ENCODE measurements at regions of chr2 and their contacts with region 1.

Region 1: GRCh38 chr2:20299113-20299512 is 51.5 kb downstream of the PUM2 start:
- DNase-seq: no peak
- ATAC-seq: no peak
- H3K4me3 ChIP-seq: no peak overlapping the region
- H3K27ac ChIP-seq: no peak overlapping the region
- H3K4me1 ChIP-seq: no peaks in the 10 kb centered on the region
- H3K27me3 ChIP-seq: no peaks in the 10 kb centered on the region
- CTCF ChIP-seq: no peak

Region 2: GRCh38 chr2:20282916-20283592 is 16.1 kb before region 1 on chr2:
- CTCF ChIA-PET with region 1: no interaction called
- POLR2A ChIA-PET with region 1: interaction called, 10 read pairs
- in situ Hi-C with region 1: no loop called
- intact Hi-C with region 1: no loop called
- DNase-seq: no peak
- ATAC-seq: no peak
- H3K4me3 ChIP-seq: no peak overlapping the region
- H3K27ac ChIP-seq: no peak overlapping the region
- H3K4me1 ChIP-seq: no peaks in the 10 kb centered on the region
- H3K27me3 ChIP-seq: no peaks in the 10 kb centered on the region
- CTCF ChIP-seq: no peak

Region 3: GRCh38 chr2:20650880-20651730 is 352.0 kb after region 1 on chr2 and contains the start of gene HS1BP3:
- CTCF ChIA-PET with region 1: interaction called, 12 read pairs
- POLR2A ChIA-PET with region 1: no interaction called
- in situ Hi-C with region 1: no loop called
- intact Hi-C with region 1: no loop called
- DNase-seq: no peak
- ATAC-seq: peak; percentile 98
- H3K4me3 ChIP-seq: peak within 1 kb of the TSS; percentile 87 to 93
- H3K27ac ChIP-seq: peak within 1 kb of the TSS; percentile 88
- H3K4me1 ChIP-seq: peaks cover 9% of the 10 kb centered on the region
- H3K27me3 ChIP-seq: no peaks in the 10 kb centered on the region
- CTCF ChIP-seq: peak; percentile 98
- total RNA-seq, gene HS1BP3: 46.1 TPM

Measured in Panc1 (cell line).